ENCODE measurements at regions of chr9 and their contacts with region 1.

Region 1: GRCh38 chr9:86434039-86434726 is 80.0 kb upstream of the TUT7 start:
- DNase-seq: peak; percentile 24
- ATAC-seq: no peak
- H3K4me3 Mint-ChIP-seq: no peak overlapping the region
- H3K27ac Mint-ChIP-seq: no peak overlapping the region
- H3K4me1 Mint-ChIP-seq: no peaks in the 10 kb centered on the region
- H3K27me3 Mint-ChIP-seq: peaks cover 11% of the 10 kb centered on the region

Region 2: DNA sequence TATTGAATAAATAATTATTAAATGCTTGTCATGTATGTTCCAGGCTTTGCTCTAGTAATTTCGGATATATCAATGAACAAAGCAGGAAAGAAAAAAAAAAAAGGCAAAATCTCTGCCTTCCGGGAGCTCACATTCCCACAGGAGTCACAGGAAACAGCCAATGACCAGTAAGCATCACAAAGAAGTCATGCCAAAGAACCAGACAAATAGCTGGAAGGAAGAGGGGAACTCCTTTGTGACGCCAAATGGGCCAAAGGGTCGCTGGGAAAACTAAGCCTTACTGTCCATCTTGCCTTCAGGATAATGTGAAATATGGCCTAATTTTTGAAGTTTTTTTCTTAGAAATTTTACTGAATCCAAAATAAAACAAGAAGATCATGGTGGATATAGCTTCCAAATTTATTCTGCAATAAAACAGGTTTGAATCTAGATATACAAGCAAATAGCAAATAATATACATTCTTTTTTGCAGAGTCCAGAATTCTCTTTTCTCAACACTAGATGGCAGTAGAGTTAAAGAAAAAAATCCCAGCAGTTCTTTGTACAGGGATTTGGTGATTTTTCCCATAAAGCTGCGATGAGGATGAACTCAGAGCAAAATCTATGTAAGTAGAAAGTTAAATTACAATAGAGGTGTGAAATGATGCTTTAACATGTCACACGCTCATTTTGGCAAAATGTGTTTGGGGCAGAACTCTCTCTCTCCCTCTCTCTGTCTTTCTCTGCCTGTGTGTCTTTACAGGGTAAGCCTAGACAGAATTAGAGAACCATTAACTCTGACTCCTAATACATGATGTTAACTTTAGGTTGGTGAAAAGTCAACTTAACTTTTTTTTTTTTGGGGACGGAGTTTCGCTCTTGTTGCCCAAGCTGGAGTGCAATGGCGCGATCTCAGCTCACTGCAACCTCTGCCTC is 20.0 kb before region 1 on chr9:
- CTCF ChIA-PET with region 1: interaction called, 12 read pairs
- POLR2A ChIA-PET with region 1: no interaction called
- DNase-seq: no peak
- ATAC-seq: no peak
- H3K4me3 Mint-ChIP-seq: no peak overlapping the region
- H3K27ac Mint-ChIP-seq: no peak overlapping the region
- H3K4me1 Mint-ChIP-seq: no peaks in the 10 kb centered on the region
- H3K27me3 Mint-ChIP-seq: peaks cover 7% of the 10 kb centered on the region

Region 3: DNA sequence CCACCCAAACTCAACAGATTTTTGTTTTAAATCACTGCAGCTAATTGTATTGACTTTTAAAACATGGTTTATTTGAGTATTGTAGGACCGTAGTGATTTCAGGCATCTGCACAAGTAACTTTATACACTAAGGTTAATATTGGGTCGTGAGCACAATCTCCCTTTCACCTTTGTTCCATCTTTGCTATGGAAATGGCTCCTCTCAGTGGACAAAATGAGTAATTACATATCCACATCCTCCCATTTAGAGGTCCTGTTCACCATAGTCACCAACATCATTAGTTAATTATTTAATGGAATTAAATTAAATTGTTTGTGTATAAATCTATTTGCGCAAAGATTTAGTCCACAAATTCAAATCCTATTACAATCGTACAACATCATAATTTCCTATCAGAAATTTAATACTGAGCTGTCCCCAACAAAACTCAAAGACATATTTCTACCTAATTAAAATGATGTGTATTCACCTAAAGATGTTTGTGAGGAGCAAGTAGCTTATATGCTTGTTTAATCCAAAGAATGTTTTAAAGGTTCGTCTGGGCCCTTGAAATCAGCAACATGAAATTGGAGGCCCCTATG is 890.5 kb after region 1 on chr9:
- CTCF ChIA-PET with region 1: interaction called, 15 read pairs
- POLR2A ChIA-PET with region 1: no interaction called
- DNase-seq: no peak
- ATAC-seq: no peak
- H3K4me3 Mint-ChIP-seq: no peak overlapping the region
- H3K27ac Mint-ChIP-seq: no peak overlapping the region
- H3K4me1 Mint-ChIP-seq: no peaks in the 10 kb centered on the region
- H3K27me3 Mint-ChIP-seq: peaks cover 4% of the 10 kb centered on the region

Measured in activated CD8-positive, alpha-beta T cell treated with anti-CD3 and anti-CD28 coated beads, Interleukin-2, amount 10 ng/mL, durations not matched to agents 7 days and 5 days (primary cell).